Panc1 (cell line): ENCODE measurements at regions of chr16 and their contacts with region 1.

Region 1: GRCh38 chr16:53922807-53923571 is 219.0 kb downstream of the FTO start:
- DNase-seq: no peak
- ATAC-seq: no peak
- H3K4me3 ChIP-seq: no peak overlapping the region
- H3K27ac ChIP-seq: no peak overlapping the region
- H3K4me1 ChIP-seq: no peaks in the 10 kb centered on the region
- H3K27me3 ChIP-seq: no peaks in the 10 kb centered on the region
- CTCF ChIP-seq: no peak

Region 2: GRCh38 chr16:54193665-54194333 is 270.8 kb after region 1 on chr16:
- CTCF ChIA-PET with region 1: no interaction called
- POLR2A ChIA-PET with region 1: no interaction called
- in situ Hi-C with region 1: no loop called
- intact Hi-C with region 1: loop called (anchors 5 kb)
- DNase-seq: no peak
- ATAC-seq: peak; percentile 92
- H3K4me3 ChIP-seq: no peak overlapping the region
- H3K27ac ChIP-seq: no peak overlapping the region
- H3K4me1 ChIP-seq: no peaks in the 10 kb centered on the region
- H3K27me3 ChIP-seq: no peaks in the 10 kb centered on the region
- CTCF ChIP-seq: peak; percentile 75